Activated B cell treated with CpG ODN at 0.5 μM for 24 hours (primary cell): ENCODE measurements at regions of chr5 and their contacts with region 1.

Region 1: GRCh38 chr5:6291961-6292360 is 86.4 kb downstream of the MED10 start:
- DNase-seq: no peak
- ATAC-seq: no peak
- H3K4me3 Mint-ChIP-seq: no peak overlapping the region
- H3K27ac Mint-ChIP-seq: no peak overlapping the region
- H3K4me1 Mint-ChIP-seq: no peaks in the 10 kb centered on the region
- H3K27me3 Mint-ChIP-seq: no peaks in the 10 kb centered on the region
- CTCF ChIP-seq: peak; percentile 23

Region 2: DNA sequence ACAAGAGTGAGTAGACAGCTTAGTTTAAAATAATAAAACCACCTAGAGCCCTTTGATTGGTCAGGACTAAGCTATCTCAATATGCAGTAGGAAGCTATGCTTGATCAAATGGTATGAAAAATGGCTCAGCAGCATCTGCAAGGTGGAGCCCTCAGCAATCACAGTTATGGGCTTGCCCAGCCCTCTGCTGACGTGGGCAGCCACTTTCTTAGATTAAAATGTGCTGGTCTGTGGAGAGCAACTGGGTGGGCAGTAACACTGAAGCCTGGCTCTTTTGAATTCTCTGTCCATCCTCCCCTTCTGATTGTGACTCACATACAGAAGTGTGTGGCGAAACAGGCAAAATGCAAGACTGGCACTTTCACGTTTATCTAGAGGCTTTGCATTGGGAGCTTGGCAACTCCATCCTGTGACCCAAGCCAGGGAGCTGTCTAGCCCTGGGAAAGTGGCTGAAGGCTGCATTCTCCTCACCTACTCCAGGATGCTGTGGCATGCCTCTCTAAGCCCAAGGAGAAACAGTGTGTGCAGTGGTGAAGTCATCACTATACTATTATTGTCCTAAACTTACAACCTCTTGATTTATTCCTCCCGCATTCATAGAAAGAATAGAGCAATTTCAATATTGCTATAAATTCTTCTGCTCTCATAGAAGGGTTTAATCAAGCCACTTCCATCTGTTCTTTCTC is 25.3 kb after region 1 on chr5:
- CTCF ChIA-PET with region 1: no interaction called
- POLR2A ChIA-PET with region 1: no interaction called
- intact Hi-C with region 1: no loop called
- DNase-seq: no peak
- ATAC-seq: no peak
- H3K4me3 Mint-ChIP-seq: no peak overlapping the region
- H3K27ac Mint-ChIP-seq: no peak overlapping the region
- H3K4me1 Mint-ChIP-seq: no peaks in the 10 kb centered on the region
- H3K27me3 Mint-ChIP-seq: no peaks in the 10 kb centered on the region
- CTCF ChIP-seq: no peak

Region 3: DNA sequence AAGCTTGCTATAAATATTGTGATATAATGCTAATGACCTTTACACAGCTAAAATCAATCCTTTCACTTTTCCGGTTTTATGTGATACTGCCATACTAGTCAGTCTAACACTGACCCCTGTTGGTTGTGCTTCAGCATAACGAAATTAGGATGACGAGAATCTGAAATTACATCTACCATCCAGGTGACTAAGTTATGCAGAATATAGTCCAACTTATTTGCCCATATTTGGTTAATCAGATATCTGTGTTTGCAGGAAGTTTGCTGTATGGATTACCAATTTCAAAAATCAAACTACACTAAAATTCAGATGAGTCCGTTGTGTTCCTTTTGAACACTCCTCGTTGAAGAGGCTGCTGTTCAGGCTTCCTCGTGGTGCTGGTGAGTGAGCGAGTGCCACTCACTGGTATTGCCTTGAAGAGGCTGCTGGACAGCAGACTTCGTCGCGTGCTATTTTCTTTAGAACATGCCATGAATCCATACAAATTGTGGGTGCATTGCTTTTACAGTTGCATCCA is 453.8 kb after region 1 on chr5:
- CTCF ChIA-PET with region 1: interaction called, 3 read pairs
- POLR2A ChIA-PET with region 1: no interaction called
- intact Hi-C with region 1: loop called (anchors 1 kb)
- DNase-seq: no peak
- ATAC-seq: peak; percentile 87
- H3K4me3 Mint-ChIP-seq: no peak overlapping the region
- H3K27ac Mint-ChIP-seq: peak overlapping the region; percentile 46
- H3K4me1 Mint-ChIP-seq: peaks cover 9% of the 10 kb centered on the region
- H3K27me3 Mint-ChIP-seq: no peaks in the 10 kb centered on the region
- CTCF ChIP-seq: peak; percentile 71